Breast epithelium (tissue), 4 donors: ENCODE measurements at regions of chr4 and their contacts with region 1.

Region 1: DNA sequence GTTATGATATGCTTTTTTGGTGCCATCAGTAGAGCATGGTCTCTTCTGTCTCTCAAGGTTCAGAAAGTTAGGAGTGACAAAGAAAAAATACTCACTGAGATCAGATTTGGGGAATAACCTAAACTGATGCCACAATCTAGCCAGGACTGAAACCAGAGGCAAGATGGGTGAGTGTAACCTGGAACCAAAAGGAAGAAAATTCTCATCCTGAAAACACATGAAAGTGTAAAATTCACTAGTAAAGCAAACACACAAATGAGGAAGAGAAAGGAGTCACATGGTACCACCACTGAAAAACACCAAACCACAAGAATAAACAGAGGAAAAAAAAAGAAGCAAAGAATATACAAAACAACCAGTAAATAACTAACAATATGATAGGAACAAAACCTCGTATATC is 96.4 kb downstream of the ANXA10 start:
- DNase-seq: no peak
- H3K4me3 ChIP-seq: no peak overlapping the region
- H3K27ac ChIP-seq: no peak overlapping the region
- H3K4me1 ChIP-seq: no peaks in the 10 kb centered on the region
- H3K27me3 ChIP-seq: no peaks in the 10 kb centered on the region
- CTCF ChIP-seq: no peak
- POLR2A ChIP-seq: no peak

Region 2: GRCh38 chr4:167989815-167990214 is 198.9 kb before region 1 on chr4:
- intact Hi-C with region 1: loop called (anchors 5 kb)
- DNase-seq: no peak
- H3K4me3 ChIP-seq: no peak overlapping the region
- H3K27ac ChIP-seq: no peak overlapping the region
- H3K4me1 ChIP-seq: no peaks in the 10 kb centered on the region
- H3K27me3 ChIP-seq: no peaks in the 10 kb centered on the region
- CTCF ChIP-seq: no peak
- POLR2A ChIP-seq: no peak

Region 3: GRCh38 chr4:168124008-168124641 is 64.6 kb before region 1 on chr4:
- intact Hi-C with region 1: no loop called
- DNase-seq: no peak
- H3K4me3 ChIP-seq: no peak overlapping the region
- H3K27ac ChIP-seq: no peak overlapping the region
- H3K4me1 ChIP-seq: no peaks in the 10 kb centered on the region
- H3K27me3 ChIP-seq: no peaks in the 10 kb centered on the region
- CTCF ChIP-seq: no peak
- POLR2A ChIP-seq: no peak